ENCODE measurements at regions of chr12 and their contacts with region 1.

Region 1: GRCh38 chr12:11648831-11649702 is at the start of gene ETV6:
- DNase-seq: peak; percentile 41 to 88 (median 62)
- ATAC-seq: peak; percentile 62
- H3K4me3 ChIP-seq: peak within 1 kb of the TSS; percentile 97
- H3K4me3 Mint-ChIP-seq: peak within 1 kb of the TSS; percentile 98
- H3K27ac ChIP-seq: peak within 1 kb of the TSS; percentile 68 to 81
- H3K27ac Mint-ChIP-seq: peak within 1 kb of the TSS; percentile 92
- H3K4me1 ChIP-seq: peaks cover 26% of the 10 kb centered on the region
- H3K4me1 Mint-ChIP-seq: peaks cover 38% of the 10 kb centered on the region
- H3K27me3 ChIP-seq: no peaks in the 10 kb centered on the region
- H3K27me3 Mint-ChIP-seq: no peaks in the 10 kb centered on the region
- CTCF ChIP-seq: no peak
- total RNA-seq, gene ETV6: 28.5 to 30.2 TPM

Region 2: GRCh38 chr12:11553871-11554533 is 95.1 kb before region 1 on chr12:
- CTCF ChIA-PET with region 1: no interaction called
- POLR2A ChIA-PET with region 1: interaction called, 5 read pairs
- intact Hi-C with region 1: loop called in 1 of 2 experiments (anchors 5 kb)
- DNase-seq: peak in 12 of 14 experiments; percentile 8 to 83 (median 32)
- ATAC-seq: peak; percentile 45
- H3K4me3 ChIP-seq: no peak overlapping the region
- H3K4me3 Mint-ChIP-seq: peak overlapping the region; percentile 71
- H3K27ac ChIP-seq: no peak overlapping the region
- H3K27ac Mint-ChIP-seq: peak overlapping the region; percentile 48
- H3K4me1 ChIP-seq: peaks cover 17% of the 10 kb centered on the region
- H3K4me1 Mint-ChIP-seq: peaks cover 24% of the 10 kb centered on the region
- H3K27me3 ChIP-seq: no peaks in the 10 kb centered on the region
- H3K27me3 Mint-ChIP-seq: no peaks in the 10 kb centered on the region
- CTCF ChIP-seq: peak; percentile 67

Region 3: DNA sequence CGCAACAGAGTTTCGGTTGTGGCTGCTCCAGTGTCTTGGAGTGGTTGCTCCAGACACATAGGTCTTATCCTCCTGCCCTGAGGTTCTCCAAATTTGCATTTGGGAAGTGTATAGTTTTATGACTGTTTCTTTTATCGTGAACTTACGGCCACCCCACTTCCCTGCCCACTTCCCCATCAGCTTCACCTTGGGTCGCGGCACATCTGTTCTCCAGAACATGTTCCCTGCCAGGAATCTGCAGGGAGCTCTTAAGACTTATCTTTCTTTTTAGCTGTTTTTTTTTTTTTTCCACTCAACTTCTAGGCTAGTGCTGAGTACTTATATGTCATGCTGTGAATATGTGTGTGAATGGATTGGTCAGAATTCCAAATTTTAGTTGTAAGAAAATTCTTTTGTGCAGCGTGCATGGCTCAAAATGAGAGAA is 75.8 kb after region 1 on chr12:
- CTCF ChIA-PET with region 1: no interaction called
- POLR2A ChIA-PET with region 1: interaction called, 6 read pairs
- intact Hi-C with region 1: loop called in 1 of 2 experiments (anchors 2 kb)
- DNase-seq: no peak
- ATAC-seq: no peak
- H3K4me3 ChIP-seq: no peak overlapping the region
- H3K4me3 Mint-ChIP-seq: no peak overlapping the region
- H3K27ac ChIP-seq: no peak overlapping the region
- H3K27ac Mint-ChIP-seq: no peak overlapping the region
- H3K4me1 ChIP-seq: peaks cover 44% of the 10 kb centered on the region
- H3K4me1 Mint-ChIP-seq: peaks cover 52% of the 10 kb centered on the region
- H3K27me3 ChIP-seq: no peaks in the 10 kb centered on the region
- H3K27me3 Mint-ChIP-seq: no peaks in the 10 kb centered on the region
- CTCF ChIP-seq: no peak

Region 4: GRCh38 chr12:11771356-11771755 is 122.3 kb after region 1 on chr12:
- CTCF ChIA-PET with region 1: no interaction called
- POLR2A ChIA-PET with region 1: no interaction called
- intact Hi-C with region 1: loop called in 1 of 2 experiments (anchors 5 kb)
- DNase-seq: peak in 3 of 14 experiments; percentile 27 to 43 (median 38)
- ATAC-seq: peak; percentile 45
- H3K4me3 ChIP-seq: no peak overlapping the region
- H3K4me3 Mint-ChIP-seq: no peak overlapping the region
- H3K27ac ChIP-seq: no peak overlapping the region
- H3K27ac Mint-ChIP-seq: peak overlapping the region; percentile 35
- H3K4me1 ChIP-seq: peaks cover 27% of the 10 kb centered on the region
- H3K4me1 Mint-ChIP-seq: peaks cover 81% of the 10 kb centered on the region
- H3K27me3 ChIP-seq: no peaks in the 10 kb centered on the region
- H3K27me3 Mint-ChIP-seq: no peaks in the 10 kb centered on the region
- CTCF ChIP-seq: no peak